Tibial artery (tissue), 4 donors: ENCODE measurements at regions of chr13 and their contacts with region 1.

Region 1: DNA sequence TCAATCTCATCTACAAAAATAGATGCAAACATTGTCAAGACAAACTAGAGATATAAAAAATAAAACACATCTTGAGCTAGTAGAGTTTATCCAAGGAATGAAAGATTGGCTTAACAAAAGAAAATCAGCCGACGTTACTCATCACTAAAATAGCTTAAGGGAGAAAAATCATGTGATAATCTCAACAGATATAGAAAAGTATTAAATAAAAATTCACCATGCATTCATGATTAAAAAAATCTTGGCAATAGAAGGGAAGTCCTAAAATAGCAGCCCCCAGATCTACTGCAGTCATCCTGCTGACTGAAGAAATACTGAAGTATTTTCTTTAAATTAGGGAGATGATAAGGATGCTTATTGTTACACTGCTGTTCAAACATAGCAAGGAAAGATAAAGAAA is 12.6 kb upstream of the DCLK1 start:
- DNase-seq: no peak
- H3K4me3 ChIP-seq: no peak overlapping the region
- H3K27ac ChIP-seq: no peak overlapping the region
- H3K4me1 ChIP-seq: no peaks in the 10 kb centered on the region
- H3K27me3 ChIP-seq: no peaks in the 10 kb centered on the region
- CTCF ChIP-seq: no peak

Region 2: GRCh38 chr13:36006348-36006747 is 137.4 kb before region 1 on chr13:
- intact Hi-C with region 1: no loop called
- DNase-seq: no peak
- H3K4me3 ChIP-seq: no peak overlapping the region
- H3K27ac ChIP-seq: no peak overlapping the region
- H3K4me1 ChIP-seq: peaks cover 5 to 12% (median 7%) of the 10 kb centered on the region in 4 donors
- H3K27me3 ChIP-seq: no peaks in the 10 kb centered on the region
- CTCF ChIP-seq: no peak

Region 3: DNA sequence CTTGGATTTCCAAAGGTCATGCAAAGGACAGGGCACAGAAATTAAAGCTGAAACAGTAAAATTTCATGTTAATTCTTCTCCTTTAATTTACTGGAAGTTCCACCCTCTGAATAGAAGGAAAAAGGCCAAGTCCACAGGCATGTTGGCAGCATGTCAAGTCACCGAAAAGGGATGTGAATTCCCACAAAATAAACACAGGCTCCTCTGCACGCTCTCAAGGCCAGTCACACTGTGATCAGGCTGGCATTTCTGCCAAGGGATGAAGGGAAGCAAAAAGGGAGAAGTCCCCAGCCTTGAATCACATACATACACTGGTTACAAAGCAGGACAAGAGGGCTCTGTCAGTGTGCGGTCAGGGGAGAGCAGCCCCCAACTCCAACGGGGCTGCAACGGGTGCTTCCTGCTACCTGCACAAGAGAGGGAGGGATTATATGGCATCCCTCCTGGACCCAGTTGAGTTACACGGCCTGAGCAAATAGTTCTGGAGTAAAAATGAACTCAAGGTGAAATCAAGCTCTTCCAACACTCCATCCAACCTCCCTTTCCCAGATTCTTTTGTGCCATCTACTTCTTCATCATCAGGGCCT is 19.4 kb before region 1 on chr13:
- intact Hi-C with region 1: loop called (anchors 1 kb)
- DNase-seq: no peak
- H3K4me3 ChIP-seq: no peak overlapping the region
- H3K27ac ChIP-seq: peak overlapping the region in 1 of 2 donors; percentile 5
- H3K4me1 ChIP-seq: peaks cover 0 to 9% (median 7%) of the 10 kb centered on the region in 4 donors
- H3K27me3 ChIP-seq: no peaks in the 10 kb centered on the region
- CTCF ChIP-seq: no peak

Region 4: GRCh38 chr13:36357692-36358091 is 214.0 kb after region 1 on chr13:
- intact Hi-C with region 1: no loop called
- DNase-seq: peak; percentile 68 to 75
- H3K4me3 ChIP-seq: no peak overlapping the region
- H3K27ac ChIP-seq: peak overlapping the region; percentile 46 to 56
- H3K4me1 ChIP-seq: peaks cover 0 to 48% (median 9%) of the 10 kb centered on the region in 4 donors
- H3K27me3 ChIP-seq: no peaks in the 10 kb centered on the region
- CTCF ChIP-seq: no peak